RWPE1 (cell line): ENCODE measurements at regions of chr11 and their contacts with region 1.

Region 1: DNA sequence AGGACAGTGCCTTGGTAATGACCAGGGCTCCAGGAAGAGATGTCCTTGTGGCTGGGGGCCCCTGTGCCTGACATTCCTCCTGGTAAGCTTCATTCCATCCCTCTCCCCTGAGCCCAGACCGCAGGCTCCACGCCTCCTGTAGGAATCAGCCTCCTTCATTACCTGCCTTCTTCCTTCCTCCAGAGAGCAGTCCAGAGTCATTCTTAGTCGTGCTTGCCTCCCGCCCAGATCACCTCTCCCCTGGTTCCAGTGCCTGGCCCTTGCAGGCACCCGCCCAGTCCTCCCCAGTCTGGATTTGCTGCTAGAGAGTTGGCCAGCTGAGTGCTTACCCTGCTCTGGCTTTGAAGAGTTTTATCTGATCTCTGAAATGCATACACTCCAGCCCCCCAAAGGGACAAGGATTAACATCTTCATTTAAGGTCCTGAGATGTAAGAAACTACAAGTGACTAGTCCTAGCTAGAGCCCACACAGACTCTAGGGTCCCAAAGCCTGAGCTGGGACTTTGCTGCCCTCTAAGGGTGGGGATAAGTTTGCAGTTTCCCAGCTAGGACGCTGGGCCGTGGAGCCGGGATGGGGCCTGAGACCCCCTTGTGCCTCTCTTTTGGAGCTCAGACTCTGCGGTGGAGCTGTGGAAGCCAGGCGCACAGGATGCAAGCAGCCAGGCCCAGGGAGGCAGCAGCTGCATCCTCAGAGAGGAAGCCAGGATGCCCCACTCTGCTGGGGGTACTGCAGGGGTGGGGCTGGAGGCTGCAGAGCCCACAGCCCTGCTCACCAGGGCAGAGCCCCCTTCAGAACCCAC is 1.6 kb downstream of the NR1H3 start:
- DNase-seq: no peak
- H3K27ac ChIP-seq: peak overlapping the region; percentile 49
- CTCF ChIP-seq: peak; percentile 27; the same call in 1 of the 2 replicates

Region 2: DNA sequence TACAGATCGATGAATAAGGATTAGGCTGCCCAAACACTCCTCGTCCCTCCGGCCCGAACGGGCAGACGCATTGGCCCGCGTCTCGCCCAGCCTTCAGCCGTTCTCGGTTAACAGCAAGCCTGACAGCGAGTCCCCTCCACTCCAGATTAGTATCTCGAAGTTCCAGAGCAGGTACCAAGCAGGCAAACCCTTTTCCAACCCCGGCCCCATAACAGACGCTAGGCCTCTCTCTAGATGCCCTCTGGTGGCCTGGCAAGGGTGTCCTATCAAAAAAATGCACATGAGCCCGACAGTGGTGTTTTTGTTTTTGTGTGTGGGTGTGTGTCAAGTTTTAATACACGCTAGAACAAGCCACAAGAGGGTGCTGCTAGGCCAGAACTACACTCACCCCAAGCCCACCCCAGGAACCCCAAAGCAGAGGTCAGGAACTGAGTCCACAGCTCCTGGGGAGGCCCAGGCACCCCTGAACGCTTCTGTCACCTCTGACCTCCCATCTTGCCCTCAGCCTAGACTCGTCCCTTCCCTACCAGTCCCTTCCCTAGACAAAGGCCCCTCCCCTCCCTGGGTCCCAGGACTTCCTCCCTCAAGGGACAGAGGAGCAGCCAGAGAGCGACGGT is 82.0 kb before region 1 on chr11:
- CTCF ChIA-PET with region 1: interaction called, 10 read pairs
- POLR2A ChIA-PET with region 1: interaction called, 3 read pairs
- DNase-seq: peak; percentile 67
- H3K27ac ChIP-seq: peak overlapping the region; percentile 98
- CTCF ChIP-seq: peak; percentile 77

Region 3: GRCh38 chr11:47296045-47296444 is 36.7 kb after region 1 on chr11:
- CTCF ChIA-PET with region 1: interaction called, 10 read pairs
- POLR2A ChIA-PET with region 1: no interaction called
- DNase-seq: no peak
- H3K27ac ChIP-seq: no peak overlapping the region
- CTCF ChIP-seq: no peak